CD8-positive, alpha-beta T cell (primary cell): ENCODE measurements at regions of chr10 and their contacts with region 1.

Region 1: DNA sequence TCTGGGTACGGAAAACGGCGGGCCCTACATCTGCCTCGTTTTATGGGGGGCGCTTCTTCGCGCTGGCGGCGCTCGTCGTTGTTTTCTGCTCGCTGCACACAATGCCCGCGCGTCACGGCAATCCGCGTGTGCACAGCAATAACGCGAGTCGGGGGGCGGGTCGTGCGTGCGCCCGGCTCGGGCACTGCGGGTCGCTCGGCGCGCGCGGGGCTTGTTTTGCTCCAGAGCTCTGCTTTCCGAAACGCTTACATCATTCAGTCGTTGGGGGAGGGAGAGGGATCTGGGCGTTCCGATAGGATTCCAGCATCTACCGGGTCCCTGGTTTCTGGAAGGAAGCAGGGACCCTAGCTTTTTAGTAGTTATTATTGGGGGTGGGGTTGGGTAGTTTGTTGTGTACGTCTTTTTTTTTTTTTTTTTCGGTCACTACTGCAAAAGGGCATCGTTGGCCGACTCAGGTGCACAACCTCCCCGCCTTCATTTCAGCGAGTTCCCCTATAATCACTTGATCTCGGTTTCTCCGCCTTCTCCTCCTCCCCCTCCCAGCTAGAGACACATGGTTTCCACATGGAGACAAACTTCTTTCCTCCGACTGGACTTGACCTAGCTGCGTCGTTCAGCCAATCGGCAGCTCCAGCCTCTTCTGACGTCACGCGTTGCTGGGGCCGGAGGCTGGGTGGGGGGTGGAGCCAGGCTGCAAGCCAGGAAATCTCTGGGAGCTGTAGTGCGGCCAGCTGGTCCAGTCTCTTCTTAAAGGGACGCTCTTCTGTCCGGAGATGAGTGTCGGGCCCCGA is 3.5 kb downstream of the MXI1 start:
- DNase-seq: peak; percentile 77 to 94 (median 90)
- ATAC-seq: peak; percentile 48
- H3K4me3 ChIP-seq: peak overlapping the region; percentile 59 to 91
- H3K4me3 Mint-ChIP-seq: peak overlapping the region; percentile 94
- H3K27ac ChIP-seq: peak overlapping the region; percentile 60 to 90
- H3K27ac Mint-ChIP-seq: peak overlapping the region; percentile 99
- H3K4me1 ChIP-seq: peaks cover 22% of the 10 kb centered on the region
- H3K4me1 Mint-ChIP-seq: peaks cover 47% of the 10 kb centered on the region
- H3K27me3 ChIP-seq: peaks cover 0 to 13% of the 10 kb centered on the region in 2 experiments
- H3K27me3 Mint-ChIP-seq: peaks cover 17% of the 10 kb centered on the region
- CTCF ChIP-seq: no peak

Region 2: DNA sequence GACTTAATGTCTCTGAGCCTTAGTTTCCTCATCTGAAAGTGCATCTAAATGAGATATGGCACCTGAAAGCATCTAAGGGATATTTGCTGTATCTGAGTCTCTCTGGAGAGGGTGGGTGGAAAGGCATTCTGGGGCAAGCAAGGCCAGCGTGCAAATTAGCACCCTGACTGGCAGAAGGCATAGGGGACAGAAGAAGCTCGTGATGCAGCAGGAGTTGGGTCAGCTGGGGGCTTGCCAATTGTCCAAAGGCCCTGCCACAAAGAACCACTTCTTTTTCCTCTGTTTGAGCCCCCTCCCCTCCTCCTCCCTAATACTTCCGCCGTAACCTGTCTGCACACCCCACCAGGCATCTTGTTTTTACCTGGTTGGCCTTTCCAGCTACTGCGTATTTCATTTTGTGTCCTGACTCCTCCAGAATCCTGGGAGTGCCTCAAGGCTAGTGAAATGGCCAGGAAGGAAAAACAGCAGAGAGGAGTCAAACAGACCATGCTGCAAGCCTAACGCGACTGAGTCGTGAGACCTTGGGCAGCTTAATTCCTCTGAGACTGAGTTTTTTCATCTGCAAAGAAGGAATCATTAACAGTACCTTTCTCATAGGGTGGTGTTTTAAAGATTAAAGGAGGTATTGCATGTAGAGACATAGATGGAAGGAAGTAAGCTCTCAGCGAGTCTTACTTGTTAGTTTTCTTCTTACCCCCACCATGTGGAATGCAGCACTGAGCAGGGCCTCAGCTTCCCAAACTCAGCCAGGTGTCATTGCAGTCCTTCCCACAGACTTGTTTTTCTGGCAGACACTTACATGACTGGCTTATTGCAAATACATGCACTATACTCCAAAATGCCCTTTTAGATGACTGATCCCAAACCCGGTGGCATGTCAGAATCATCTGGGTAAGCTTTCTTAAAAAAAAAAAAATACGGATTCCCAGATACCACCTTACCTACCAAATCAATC is 52.5 kb before region 1 on chr10:
- CTCF ChIA-PET with region 1: interaction called, 4 read pairs
- POLR2A ChIA-PET with region 1: interaction called, 17 read pairs
- intact Hi-C with region 1: loop called (anchors 2 to 5 kb)
- DNase-seq: peak in 1 of 9 experiments; percentile 43
- ATAC-seq: no peak
- H3K4me3 ChIP-seq: no peak overlapping the region
- H3K4me3 Mint-ChIP-seq: no peak overlapping the region
- H3K27ac ChIP-seq: no peak overlapping the region
- H3K27ac Mint-ChIP-seq: no peak overlapping the region
- H3K4me1 ChIP-seq: peaks cover 24% of the 10 kb centered on the region
- H3K4me1 Mint-ChIP-seq: peaks cover 27% of the 10 kb centered on the region
- H3K27me3 ChIP-seq: peaks cover 43 to 59% of the 10 kb centered on the region in 2 experiments
- H3K27me3 Mint-ChIP-seq: peaks cover 79% of the 10 kb centered on the region
- CTCF ChIP-seq: no peak

Region 3: GRCh38 chr10:110279407-110279986 is 68.6 kb after region 1 on chr10:
- CTCF ChIA-PET with region 1: interaction called, 12 read pairs
- POLR2A ChIA-PET with region 1: interaction called, 4 read pairs
- intact Hi-C with region 1: loop called (anchors 1 to 2 kb)
- DNase-seq: peak in 8 of 9 experiments; percentile 6 to 76 (median 44)
- ATAC-seq: peak; percentile 81
- H3K4me3 ChIP-seq: no peak overlapping the region
- H3K4me3 Mint-ChIP-seq: no peak overlapping the region
- H3K27ac ChIP-seq: no peak overlapping the region
- H3K27ac Mint-ChIP-seq: no peak overlapping the region
- H3K4me1 ChIP-seq: peaks cover under 1% of the 10 kb centered on the region
- H3K4me1 Mint-ChIP-seq: peaks cover 15% of the 10 kb centered on the region
- H3K27me3 ChIP-seq: no peaks in the 10 kb centered on the region
- H3K27me3 Mint-ChIP-seq: no peaks in the 10 kb centered on the region
- CTCF ChIP-seq: peak; percentile 77

Region 4: DNA sequence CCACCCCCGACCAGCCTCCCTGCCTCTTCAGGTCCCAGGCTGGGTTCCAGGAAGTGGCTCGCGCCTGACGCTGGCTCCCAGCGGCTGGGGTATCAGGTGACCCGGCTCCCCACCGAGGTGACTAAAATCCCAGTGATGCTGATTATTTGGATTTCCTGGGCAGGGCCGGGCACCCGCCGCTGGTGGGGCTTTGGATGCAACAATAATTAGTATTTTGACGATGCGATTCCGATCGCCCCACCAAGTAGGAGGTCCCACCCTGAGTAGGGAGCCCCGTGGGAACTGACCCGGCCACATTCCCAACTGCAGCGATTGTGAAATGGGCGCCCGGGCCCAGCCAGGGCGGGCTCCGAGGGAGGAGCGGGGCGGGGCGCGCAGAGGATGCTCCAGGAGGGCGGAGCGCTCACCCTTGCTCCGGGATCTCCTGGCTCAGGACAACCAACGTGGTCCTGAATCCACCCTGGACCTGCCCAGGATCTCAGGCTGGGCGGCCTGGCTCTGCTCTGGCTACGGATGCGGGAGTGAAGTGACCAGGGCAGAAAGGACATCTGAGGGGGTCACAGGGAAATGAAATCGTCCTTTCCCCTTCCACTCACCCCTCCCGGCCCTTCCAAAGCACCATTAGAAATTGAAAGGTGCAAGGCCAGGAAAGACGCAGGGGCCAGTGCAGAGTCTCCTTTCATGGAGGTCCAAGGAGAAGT is 319.4 kb after region 1 on chr10:
- CTCF ChIA-PET with region 1: no interaction called
- POLR2A ChIA-PET with region 1: no interaction called
- intact Hi-C with region 1: no loop called
- DNase-seq: peak in 2 of 9 experiments; percentile 38 to 45
- ATAC-seq: no peak
- H3K4me3 ChIP-seq: no peak overlapping the region
- H3K4me3 Mint-ChIP-seq: peak overlapping the region; percentile 26
- H3K27ac ChIP-seq: no peak overlapping the region
- H3K27ac Mint-ChIP-seq: no peak overlapping the region
- H3K4me1 ChIP-seq: peaks cover 16% of the 10 kb centered on the region
- H3K4me1 Mint-ChIP-seq: peaks cover 24% of the 10 kb centered on the region
- H3K27me3 ChIP-seq: no peaks in the 10 kb centered on the region
- H3K27me3 Mint-ChIP-seq: no peaks in the 10 kb centered on the region
- CTCF ChIP-seq: no peak